ENCODE measurements at regions of chr14 and their contacts with region 1.

Region 1: GRCh38 chr14:23379366-23380196 is 2.7 kb downstream of the CMTM5 start:
- DNase-seq: peak; percentile 73
- H3K4me3 Mint-ChIP-seq: no peak overlapping the region
- H3K27ac Mint-ChIP-seq: no peak overlapping the region
- H3K4me1 Mint-ChIP-seq: no peaks in the 10 kb centered on the region
- H3K27me3 Mint-ChIP-seq: peaks cover 7% of the 10 kb centered on the region

Region 2: GRCh38 chr14:23301288-23301968 is 78.2 kb before region 1 on chr14:
- CTCF ChIA-PET with region 1: interaction called, 10 read pairs
- POLR2A ChIA-PET with region 1: no interaction called
- intact Hi-C with region 1: no loop called
- DNase-seq: peak; percentile 98
- H3K4me3 Mint-ChIP-seq: peak overlapping the region; percentile 94
- H3K27ac Mint-ChIP-seq: peak overlapping the region; percentile 94
- H3K4me1 Mint-ChIP-seq: peaks cover 22% of the 10 kb centered on the region
- H3K27me3 Mint-ChIP-seq: peaks cover 5% of the 10 kb centered on the region

Region 3: GRCh38 chr14:23327947-23328744 is 51.4 kb before region 1 on chr14:
- CTCF ChIA-PET with region 1: interaction called, 108 read pairs
- POLR2A ChIA-PET with region 1: interaction called, 5 read pairs
- intact Hi-C with region 1: loop called (anchors 1 kb)
- DNase-seq: peak; percentile 78
- H3K4me3 Mint-ChIP-seq: no peak overlapping the region
- H3K27ac Mint-ChIP-seq: no peak overlapping the region
- H3K4me1 Mint-ChIP-seq: peaks cover 13% of the 10 kb centered on the region
- H3K27me3 Mint-ChIP-seq: peaks cover 3% of the 10 kb centered on the region

Region 4: DNA sequence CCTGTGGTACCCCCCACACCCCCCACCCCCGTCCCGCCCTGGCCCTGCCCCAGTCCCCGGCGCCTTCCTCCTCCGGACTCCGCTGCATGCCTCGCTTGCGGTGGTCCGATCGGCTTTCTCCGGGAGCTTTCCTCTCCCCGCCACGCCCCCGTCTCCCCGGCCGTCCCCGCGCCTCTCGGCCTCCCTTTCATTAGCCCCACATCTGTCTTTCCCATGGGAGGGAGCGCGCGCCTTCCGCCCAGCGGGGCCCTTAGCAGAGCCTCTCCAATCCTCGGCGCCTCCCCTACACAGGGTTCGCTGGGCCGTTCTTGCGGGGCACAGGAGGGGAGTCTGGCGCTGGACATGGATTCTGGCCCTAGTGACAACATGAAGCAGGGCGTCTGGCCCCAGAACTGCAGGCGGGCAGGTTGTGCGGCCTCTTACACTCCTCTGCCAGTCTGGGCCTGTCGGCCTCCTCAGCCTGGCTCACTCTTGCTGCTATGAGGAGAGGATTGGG is 13.1 kb before region 1 on chr14:
- CTCF ChIA-PET with region 1: interaction called, 21 read pairs
- POLR2A ChIA-PET with region 1: no interaction called
- intact Hi-C with region 1: no loop called
- DNase-seq: no peak
- H3K4me3 Mint-ChIP-seq: no peak overlapping the region
- H3K27ac Mint-ChIP-seq: no peak overlapping the region
- H3K4me1 Mint-ChIP-seq: peaks cover 4% of the 10 kb centered on the region
- H3K27me3 Mint-ChIP-seq: peaks cover 27% of the 10 kb centered on the region

Region 5: GRCh38 chr14:23512156-23512555 is 132.6 kb after region 1 on chr14:
- CTCF ChIA-PET with region 1: interaction called, 10 read pairs
- POLR2A ChIA-PET with region 1: no interaction called
- intact Hi-C with region 1: no loop called
- DNase-seq: peak; percentile 13
- H3K4me3 Mint-ChIP-seq: peak overlapping the region; percentile 53
- H3K27ac Mint-ChIP-seq: no peak overlapping the region
- H3K4me1 Mint-ChIP-seq: peaks cover 3% of the 10 kb centered on the region
- H3K27me3 Mint-ChIP-seq: no peaks in the 10 kb centered on the region